A673 (cell line): ENCODE measurements at regions of chr14 and their contacts with region 1.

Region 1: DNA sequence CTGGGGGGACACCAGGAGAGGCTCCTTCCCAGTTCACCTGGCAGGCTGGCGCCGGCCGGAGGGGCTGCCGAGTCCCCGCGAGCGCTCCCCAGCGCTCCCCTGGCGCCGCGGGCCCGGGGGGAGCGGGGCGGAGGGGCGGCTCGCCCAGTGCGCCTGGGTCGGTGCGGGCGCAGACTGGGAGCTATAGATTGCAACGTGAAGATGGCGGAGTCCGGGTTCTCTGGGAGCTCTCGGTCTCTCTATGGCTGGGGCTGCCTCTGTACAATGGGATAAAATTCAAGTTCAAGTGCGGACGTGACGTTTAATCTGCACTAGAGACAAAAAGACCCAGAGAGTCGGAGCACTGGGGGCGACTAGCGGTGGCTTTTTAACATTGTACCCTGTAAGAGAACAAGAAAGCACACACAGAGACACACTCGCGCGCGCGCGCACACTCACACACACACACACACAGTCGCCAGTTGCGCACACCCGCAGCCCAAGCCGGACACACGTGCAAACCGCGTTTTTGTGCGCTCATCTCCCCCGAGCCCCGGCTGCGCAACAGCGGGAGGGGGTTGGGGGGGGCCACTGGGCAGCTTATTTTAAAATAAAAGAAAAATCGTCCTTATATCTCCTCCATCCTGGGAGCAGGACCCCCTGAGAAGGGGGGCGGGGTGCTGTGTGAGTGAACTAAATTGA is at the start of gene BCL11B:
- DNase-seq: peak; percentile 99
- H3K4me3 ChIP-seq: peak within 1 kb of the TSS; percentile 85
- H3K27ac ChIP-seq: peak within 1 kb of the TSS; percentile 93
- H3K4me1 ChIP-seq: peaks cover 38% of the 10 kb centered on the region
- H3K27me3 ChIP-seq: no peaks in the 10 kb centered on the region
- CTCF ChIP-seq: peak; percentile 78
- total RNA-seq, gene BCL11B: 80.6 and 81.3 TPM in 2 replicates

Region 2: DNA sequence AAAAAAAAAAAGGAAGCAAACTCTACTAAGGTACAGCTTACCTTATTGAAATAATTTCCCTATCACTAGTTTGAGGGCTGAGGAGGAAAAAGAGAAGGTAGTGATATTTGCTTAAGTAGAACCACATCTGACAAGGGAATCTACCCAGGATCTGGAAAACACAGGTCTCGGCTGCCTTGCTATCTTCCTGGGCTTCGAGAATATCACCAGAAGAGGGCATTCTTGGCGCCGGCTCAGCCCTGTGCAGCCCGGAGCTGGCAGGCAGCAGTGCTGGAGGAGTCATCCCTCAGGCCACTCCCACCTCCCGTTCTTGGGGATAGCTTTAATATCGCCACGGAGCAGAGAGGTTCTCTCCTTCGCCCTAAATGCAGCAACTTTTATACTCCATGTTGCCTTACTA is 1293.8 kb before region 1 on chr14:
- CTCF ChIA-PET with region 1: no interaction called
- POLR2A ChIA-PET with region 1: no interaction called
- intact Hi-C with region 1: loop called (anchors 5 kb)
- DNase-seq: peak; percentile 92
- H3K4me3 ChIP-seq: peak overlapping the region; percentile 46
- H3K27ac ChIP-seq: peak overlapping the region; percentile 85
- H3K4me1 ChIP-seq: peaks cover 33% of the 10 kb centered on the region
- H3K27me3 ChIP-seq: no peaks in the 10 kb centered on the region
- CTCF ChIP-seq: peak; percentile 71

Region 3: GRCh38 chr14:98494582-98494981 is 777.5 kb before region 1 on chr14:
- CTCF ChIA-PET with region 1: no interaction called
- POLR2A ChIA-PET with region 1: no interaction called
- intact Hi-C with region 1: loop called (anchors 5 kb)
- DNase-seq: peak; percentile 52
- H3K4me3 ChIP-seq: no peak overlapping the region
- H3K27ac ChIP-seq: no peak overlapping the region
- H3K4me1 ChIP-seq: peaks cover 25% of the 10 kb centered on the region
- H3K27me3 ChIP-seq: no peaks in the 10 kb centered on the region
- CTCF ChIP-seq: no peak

Region 4: GRCh38 chr14:99415496-99416281 is 143.6 kb after region 1 on chr14:
- CTCF ChIA-PET with region 1: no interaction called
- POLR2A ChIA-PET with region 1: no interaction called
- intact Hi-C with region 1: loop called (anchors 2 kb)
- DNase-seq: peak; percentile 94
- H3K4me3 ChIP-seq: peak overlapping the region; percentile 0
- H3K27ac ChIP-seq: no peak overlapping the region
- H3K4me1 ChIP-seq: peaks cover 22% of the 10 kb centered on the region
- H3K27me3 ChIP-seq: no peaks in the 10 kb centered on the region
- CTCF ChIP-seq: peak; percentile 88